CD4-positive, alpha-beta T cell (primary cell): ENCODE measurements at regions of chr20 and their contacts with region 1.

Region 1: GRCh38 chr20:41028348-41029148 is at the start of gene TOP1:
- DNase-seq: peak; percentile 99 to 100 (median 100)
- ATAC-seq: peak; percentile 97
- H3K4me3 ChIP-seq: peak within 1 kb of the TSS; percentile 83
- H3K4me3 Mint-ChIP-seq: peak within 1 kb of the TSS; percentile 98
- H3K27ac ChIP-seq: peak within 1 kb of the TSS; percentile 86 to 93
- H3K27ac Mint-ChIP-seq: peak within 1 kb of the TSS; percentile 98
- H3K4me1 ChIP-seq: peaks cover 36% of the 10 kb centered on the region
- H3K4me1 Mint-ChIP-seq: peaks cover 53% of the 10 kb centered on the region
- H3K27me3 ChIP-seq: no peaks in the 10 kb centered on the region
- H3K27me3 Mint-ChIP-seq: no peaks in the 10 kb centered on the region
- CTCF ChIP-seq: no peak
- total RNA-seq, gene TOP1: 37.6 to 41.7 TPM

Region 2: GRCh38 chr20:41040855-41041254 is 12.3 kb after region 1 on chr20:
- CTCF ChIA-PET with region 1: interaction called, 10 read pairs
- POLR2A ChIA-PET with region 1: interaction called, 11 read pairs
- intact Hi-C with region 1: loop called in 1 of 2 experiments (anchors 2 kb)
- DNase-seq: peak in 1 of 14 experiments; percentile 21
- ATAC-seq: peak; percentile 71
- H3K4me3 ChIP-seq: no peak overlapping the region
- H3K4me3 Mint-ChIP-seq: peak overlapping the region; percentile 60
- H3K27ac ChIP-seq: no peak overlapping the region
- H3K27ac Mint-ChIP-seq: no peak overlapping the region
- H3K4me1 ChIP-seq: peaks cover 32% of the 10 kb centered on the region
- H3K4me1 Mint-ChIP-seq: peaks cover 89% of the 10 kb centered on the region
- H3K27me3 ChIP-seq: no peaks in the 10 kb centered on the region
- H3K27me3 Mint-ChIP-seq: no peaks in the 10 kb centered on the region
- CTCF ChIP-seq: no peak

Region 3: GRCh38 chr20:41047975-41048305 is 19.4 kb after region 1 on chr20:
- CTCF ChIA-PET with region 1: interaction called, 10 read pairs
- POLR2A ChIA-PET with region 1: interaction called, 11 read pairs
- intact Hi-C with region 1: loop called (anchors 2 kb)
- DNase-seq: peak in 3 of 14 experiments; percentile 61 to 70 (median 63)
- ATAC-seq: peak; percentile 71
- H3K4me3 ChIP-seq: peak overlapping the region; percentile 37
- H3K4me3 Mint-ChIP-seq: peak overlapping the region; percentile 80
- H3K27ac ChIP-seq: peak overlapping the region; percentile 54 to 56
- H3K27ac Mint-ChIP-seq: peak overlapping the region; percentile 69
- H3K4me1 ChIP-seq: peaks cover 54% of the 10 kb centered on the region
- H3K4me1 Mint-ChIP-seq: peaks cover 94% of the 10 kb centered on the region
- H3K27me3 ChIP-seq: no peaks in the 10 kb centered on the region
- H3K27me3 Mint-ChIP-seq: no peaks in the 10 kb centered on the region
- CTCF ChIP-seq: no peak

Region 4: DNA sequence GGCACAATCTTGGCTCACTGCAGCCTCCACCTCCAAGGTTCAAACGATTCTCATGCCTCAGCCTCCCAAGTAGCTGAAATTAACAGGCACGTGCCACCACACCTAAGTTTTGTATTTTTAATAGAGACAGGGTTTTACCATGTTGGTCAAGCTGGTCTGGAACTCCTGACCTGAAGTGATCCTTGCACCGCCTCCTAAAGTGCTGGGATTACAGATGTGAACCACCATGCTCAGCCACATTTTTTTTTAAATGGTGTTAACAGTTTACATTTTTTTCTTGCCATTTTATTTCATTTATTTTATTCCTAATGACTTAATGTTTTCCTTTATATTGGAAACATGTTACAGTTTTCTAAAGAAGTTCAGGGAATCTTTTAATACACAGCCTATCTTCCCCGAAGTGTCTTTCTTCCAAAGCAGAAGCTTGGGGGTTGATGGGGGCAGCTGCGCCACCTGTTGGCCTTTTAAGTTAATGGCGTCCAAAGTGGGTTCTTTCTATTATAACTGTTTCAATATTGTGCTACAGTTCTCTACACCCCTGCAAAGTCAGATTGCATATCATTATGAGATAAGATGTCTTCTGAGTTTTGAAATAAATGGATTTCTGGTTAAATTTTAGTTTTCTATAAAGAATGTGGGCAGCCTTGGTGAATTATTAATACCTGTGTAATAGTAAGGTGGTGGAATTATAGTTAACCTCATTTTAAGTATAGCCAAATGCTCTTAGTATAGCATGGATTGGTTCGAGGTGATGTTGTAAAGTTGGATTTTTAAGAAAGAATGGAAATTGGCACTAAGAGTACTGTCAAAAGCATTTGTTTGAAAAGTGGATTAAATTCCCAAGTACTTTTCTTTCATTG is 66.8 kb after region 1 on chr20:
- CTCF ChIA-PET with region 1: interaction called, 10 read pairs
- POLR2A ChIA-PET with region 1: no interaction called
- intact Hi-C with region 1: loop called in 1 of 2 experiments (anchors 5 kb)
- DNase-seq: peak; percentile 22 to 82 (median 46)
- ATAC-seq: peak; percentile 75
- H3K4me3 ChIP-seq: no peak overlapping the region
- H3K4me3 Mint-ChIP-seq: no peak overlapping the region
- H3K27ac ChIP-seq: no peak overlapping the region
- H3K27ac Mint-ChIP-seq: peak overlapping the region; percentile 4
- H3K4me1 ChIP-seq: no peaks in the 10 kb centered on the region
- H3K4me1 Mint-ChIP-seq: peaks cover 6% of the 10 kb centered on the region
- H3K27me3 ChIP-seq: no peaks in the 10 kb centered on the region
- H3K27me3 Mint-ChIP-seq: no peaks in the 10 kb centered on the region
- CTCF ChIP-seq: peak; percentile 98

Region 5: GRCh38 chr20:41232973-41233926 is 204.7 kb after region 1 on chr20:
- CTCF ChIA-PET with region 1: no interaction called
- POLR2A ChIA-PET with region 1: no interaction called
- intact Hi-C with region 1: no loop called
- DNase-seq: no peak
- ATAC-seq: no peak
- H3K4me3 ChIP-seq: no peak overlapping the region
- H3K4me3 Mint-ChIP-seq: no peak overlapping the region
- H3K27ac ChIP-seq: no peak overlapping the region
- H3K27ac Mint-ChIP-seq: no peak overlapping the region
- H3K4me1 ChIP-seq: peaks cover 11% of the 10 kb centered on the region
- H3K4me1 Mint-ChIP-seq: peaks cover 26% of the 10 kb centered on the region
- H3K27me3 ChIP-seq: no peaks in the 10 kb centered on the region
- H3K27me3 Mint-ChIP-seq: no peaks in the 10 kb centered on the region
- CTCF ChIP-seq: no peak

Region 6: DNA sequence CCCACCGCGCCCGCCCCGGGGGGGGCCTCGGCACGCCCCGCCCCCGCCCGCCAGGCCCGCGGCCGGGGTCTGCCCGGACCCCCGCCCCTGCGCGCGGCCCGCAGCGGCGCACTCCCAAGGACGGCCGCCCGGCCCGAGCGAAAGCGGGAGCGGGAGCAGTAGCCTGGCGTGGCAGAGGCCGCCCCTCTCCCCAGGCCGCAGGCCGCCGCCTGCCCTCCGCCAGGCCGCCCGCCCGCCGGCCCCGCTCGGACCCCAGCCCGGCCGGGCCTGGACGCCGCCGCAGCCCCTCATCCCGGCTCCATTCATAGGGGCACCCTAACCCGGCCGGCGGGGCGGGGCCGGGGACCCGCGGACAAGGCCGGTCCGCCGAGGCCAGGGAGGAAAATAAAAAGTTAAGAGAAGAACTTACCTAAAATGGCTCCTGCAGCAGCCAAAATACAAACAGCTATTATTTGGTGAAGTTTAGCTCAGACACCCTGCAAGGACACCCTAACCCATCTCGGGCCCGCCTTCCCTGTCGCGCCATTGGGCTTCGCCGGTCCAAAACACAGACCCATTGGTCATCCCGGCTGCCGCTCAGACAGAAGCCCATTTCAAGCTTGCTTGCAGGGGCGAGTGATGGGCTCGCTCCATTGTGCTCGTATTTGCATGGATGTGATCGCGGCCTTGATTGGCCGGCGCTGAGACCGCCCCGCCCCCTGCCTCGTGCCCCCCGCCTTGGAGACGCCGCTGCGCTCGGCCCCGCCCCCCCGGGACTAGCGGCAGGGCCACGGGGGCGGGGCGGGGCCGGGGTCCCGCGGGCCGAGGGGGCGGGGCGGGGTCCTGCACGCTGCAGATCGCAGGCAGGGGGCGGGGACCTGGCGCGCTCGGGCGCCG is 589.6 kb after region 1 on chr20 and contains the start of gene CHD6:
- CTCF ChIA-PET with region 1: no interaction called
- POLR2A ChIA-PET with region 1: no interaction called
- intact Hi-C with region 1: loop called in 1 of 2 experiments (anchors 5 kb)
- DNase-seq: peak; percentile 98 to 100 (median 99)
- ATAC-seq: peak; percentile 96
- H3K4me3 ChIP-seq: peak within 1 kb of the TSS; percentile 75
- H3K4me3 Mint-ChIP-seq: peak within 1 kb of the TSS; percentile 99
- H3K27ac ChIP-seq: peak within 1 kb of the TSS; percentile 10 to 53
- H3K27ac Mint-ChIP-seq: peak within 1 kb of the TSS; percentile 93
- H3K4me1 ChIP-seq: peaks cover 19% of the 10 kb centered on the region
- H3K4me1 Mint-ChIP-seq: peaks cover 55% of the 10 kb centered on the region
- H3K27me3 ChIP-seq: no peaks in the 10 kb centered on the region
- H3K27me3 Mint-ChIP-seq: no peaks in the 10 kb centered on the region
- CTCF ChIP-seq: no peak
- total RNA-seq, gene CHD6: 114 to 126 TPM

Region 7: GRCh38 chr20:41693136-41693979 is 664.8 kb after region 1 on chr20:
- CTCF ChIA-PET with region 1: no interaction called
- POLR2A ChIA-PET with region 1: no interaction called
- intact Hi-C with region 1: loop called in 1 of 2 experiments (anchors 5 kb)
- DNase-seq: peak; percentile 67 to 93 (median 76)
- ATAC-seq: peak; percentile 86
- H3K4me3 ChIP-seq: peak overlapping the region; percentile 83
- H3K4me3 Mint-ChIP-seq: peak overlapping the region; percentile 90
- H3K27ac ChIP-seq: peak overlapping the region; percentile 76 to 87
- H3K27ac Mint-ChIP-seq: peak overlapping the region; percentile 87
- H3K4me1 ChIP-seq: peaks cover 14% of the 10 kb centered on the region
- H3K4me1 Mint-ChIP-seq: peaks cover 27% of the 10 kb centered on the region
- H3K27me3 ChIP-seq: peaks cover 0 to 3% of the 10 kb centered on the region in 2 experiments
- H3K27me3 Mint-ChIP-seq: peaks cover 5% of the 10 kb centered on the region
- CTCF ChIP-seq: peak; percentile 53